ENCODE measurements at regions of chr4 and their contacts with region 1.

Region 1: DNA sequence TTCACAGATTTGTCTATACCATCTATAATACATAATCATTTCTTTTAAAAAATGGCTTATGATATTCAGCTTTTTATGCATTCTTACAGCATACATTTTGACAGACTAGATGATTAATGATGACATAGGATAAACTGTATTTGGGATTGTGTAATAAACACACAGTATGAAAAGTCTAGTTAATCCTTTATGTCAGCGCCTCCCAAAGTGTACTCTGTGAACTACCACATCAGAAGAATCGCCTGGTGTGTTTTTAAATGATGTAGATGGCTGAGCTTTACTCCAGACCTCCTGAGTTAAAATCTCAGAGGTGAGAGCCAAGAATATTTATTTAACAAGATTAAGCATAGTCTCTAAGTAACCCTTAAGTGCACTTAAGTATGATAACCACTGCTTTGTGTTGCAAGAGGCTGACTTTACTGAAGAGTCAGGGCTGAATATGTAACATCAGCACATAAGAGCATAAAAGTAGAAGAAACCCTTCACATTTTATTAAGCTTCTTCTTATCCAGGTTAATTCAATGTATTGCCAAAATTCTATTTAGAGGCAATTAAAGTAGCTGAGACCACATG is 104.2 kb downstream of the ANK2 start:
- DNase-seq: no peak
- H3K4me3 ChIP-seq: no peak overlapping the region
- H3K27ac ChIP-seq: no peak overlapping the region
- H3K4me1 ChIP-seq: no peaks in the 10 kb centered on the region
- H3K27me3 ChIP-seq: no peaks in the 10 kb centered on the region
- CTCF ChIP-seq: 0 out of 2 replicates have a peak, but pooled peaks have one; percentile 20

Region 2: GRCh38 chr4:112951362-112952312 is 202.0 kb before region 1 on chr4:
- CTCF ChIA-PET with region 1: no interaction called
- POLR2A ChIA-PET with region 1: no interaction called
- intact Hi-C with region 1: no loop called
- DNase-seq: no peak
- H3K4me3 ChIP-seq: no peak overlapping the region
- H3K27ac ChIP-seq: no peak overlapping the region
- H3K4me1 ChIP-seq: no peaks in the 10 kb centered on the region
- H3K27me3 ChIP-seq: no peaks in the 10 kb centered on the region
- CTCF ChIP-seq: peak; percentile 64; the same call in 1 of the 2 replicates

Region 3: GRCh38 chr4:114464726-114465272 is 1311.2 kb after region 1 on chr4:
- CTCF ChIA-PET with region 1: no interaction called
- POLR2A ChIA-PET with region 1: interaction called, 28 read pairs
- intact Hi-C with region 1: no loop called
- DNase-seq: no peak
- H3K4me3 ChIP-seq: no peak overlapping the region
- H3K27ac ChIP-seq: no peak overlapping the region
- H3K4me1 ChIP-seq: no peaks in the 10 kb centered on the region
- H3K27me3 ChIP-seq: no peaks in the 10 kb centered on the region
- CTCF ChIP-seq: no peak